HepG2 (cell line): ENCODE measurements at regions of chr12 and their contacts with region 1.

Region 1: GRCh38 chr12:131432532-131433260 is 278.2 kb upstream of the SFSWAP start:
- DNase-seq: no peak
- ATAC-seq: no peak
- H3K4me3 ChIP-seq: no peak overlapping the region
- H3K27ac ChIP-seq: no peak overlapping the region
- H3K4me1 ChIP-seq: no peaks in the 10 kb centered on the region
- H3K27me3 ChIP-seq: 0 out of 5 replicates have a peak, but pooled peaks cover 0 to 4% of the 10 kb centered on the region in 2 experiments
- CTCF ChIP-seq: no peak
- EP300 ChIP-seq: no peak
- POLR2A ChIP-seq: no peak
- RAD21 ChIP-seq: no peak

Region 2: GRCh38 chr12:131222256-131223139 is 210.2 kb before region 1 on chr12:
- CTCF ChIA-PET with region 1: no interaction called
- POLR2A ChIA-PET with region 1: no interaction called
- in situ Hi-C with region 1: loop called (anchors 10 kb)
- intact Hi-C with region 1: no loop called
- DNase-seq: no peak
- ATAC-seq: no peak
- H3K4me3 ChIP-seq: no peak overlapping the region
- H3K27ac ChIP-seq: no peak overlapping the region
- H3K4me1 ChIP-seq: no peaks in the 10 kb centered on the region
- H3K27me3 ChIP-seq: peaks cover 5 to 14% of the 10 kb centered on the region in 2 experiments; a peak in 4 of 5 replicates
- CTCF ChIP-seq: no peak
- EP300 ChIP-seq: no peak
- POLR2A ChIP-seq: no peak
- RAD21 ChIP-seq: no peak

Region 3: DNA sequence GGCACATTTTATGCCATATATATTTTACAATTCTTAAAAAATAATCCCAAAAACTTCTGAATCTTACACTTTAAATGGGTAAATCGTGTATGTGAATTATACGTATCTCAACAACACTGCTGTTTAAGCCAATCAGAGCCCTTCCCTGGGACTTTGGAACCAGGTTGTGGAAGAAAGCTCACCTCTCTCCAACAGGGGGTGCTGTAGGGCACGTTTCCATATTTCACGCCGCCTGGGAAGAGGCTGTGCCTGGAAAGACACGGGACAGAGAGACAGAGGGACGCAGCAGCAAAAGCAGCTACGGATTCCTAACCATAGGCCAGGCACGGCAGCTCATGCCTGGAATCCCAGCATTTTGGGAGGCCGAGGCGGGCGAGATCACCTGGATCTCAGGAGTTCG is 1027.9 kb after region 1 on chr12:
- CTCF ChIA-PET with region 1: no interaction called
- POLR2A ChIA-PET with region 1: no interaction called
- in situ Hi-C with region 1: no loop called
- intact Hi-C with region 1: no loop called
- DNase-seq: peak; percentile 40
- ATAC-seq: peak; percentile 32; the same call in 2 of the 3 replicates
- H3K4me3 ChIP-seq: no peak overlapping the region
- H3K27ac ChIP-seq: no peak overlapping the region
- H3K4me1 ChIP-seq: peaks cover 7% of the 10 kb centered on the region
- H3K27me3 ChIP-seq: peaks cover 14 to 53% of the 10 kb centered on the region in 2 experiments
- CTCF ChIP-seq: peak; percentile 77
- EP300 ChIP-seq: no peak
- POLR2A ChIP-seq: no peak
- RAD21 ChIP-seq: 0 out of 2 replicates have a peak, but pooled peaks have one; percentile 11